ENCODE measurements at regions of chr7 and their contacts with region 1.

Region 1: DNA sequence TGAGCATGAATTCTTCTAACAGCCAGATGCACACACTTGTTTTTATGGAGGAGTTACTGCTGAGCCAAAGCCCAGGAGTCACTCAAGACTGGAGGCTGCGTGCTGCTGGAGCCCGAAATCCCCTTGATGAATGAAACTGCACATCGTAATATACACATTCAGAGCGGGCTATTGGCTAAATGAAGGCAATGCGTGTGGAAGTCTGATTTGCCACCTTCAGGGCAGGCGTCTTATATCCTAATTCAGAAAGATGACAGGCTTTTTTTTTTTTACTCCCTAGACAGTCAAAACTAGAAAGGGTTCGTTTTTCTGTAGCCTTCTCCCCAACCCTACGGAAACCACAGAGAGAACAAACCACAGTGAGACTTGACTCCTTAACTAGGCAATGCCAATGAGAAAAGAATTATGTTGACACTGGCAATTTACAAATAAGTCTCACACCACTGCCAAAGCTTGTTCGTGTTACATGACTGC is 227.2 kb upstream of the KLF14 start:
- H3K4me3 Mint-ChIP-seq: peak overlapping the region; percentile 66
- H3K27ac Mint-ChIP-seq: peak overlapping the region; percentile 95
- H3K4me1 Mint-ChIP-seq: peaks cover 67% of the 10 kb centered on the region
- H3K27me3 Mint-ChIP-seq: no peaks in the 10 kb centered on the region

Region 2: GRCh38 chr7:130912862-130913631 is 48.1 kb before region 1 on chr7:
- intact Hi-C with region 1: loop called (anchors 1 kb)
- H3K4me3 Mint-ChIP-seq: peak overlapping the region; percentile 69
- H3K27ac Mint-ChIP-seq: peak overlapping the region; percentile 79
- H3K4me1 Mint-ChIP-seq: peaks cover 83% of the 10 kb centered on the region
- H3K27me3 Mint-ChIP-seq: no peaks in the 10 kb centered on the region

Region 3: GRCh38 chr7:130943336-130943901 is 17.7 kb before region 1 on chr7:
- intact Hi-C with region 1: loop called (anchors 1 kb)
- H3K4me3 Mint-ChIP-seq: peak overlapping the region; percentile 60
- H3K27ac Mint-ChIP-seq: peak overlapping the region; percentile 72
- H3K4me1 Mint-ChIP-seq: peaks cover 63% of the 10 kb centered on the region
- H3K27me3 Mint-ChIP-seq: no peaks in the 10 kb centered on the region

Region 4: DNA sequence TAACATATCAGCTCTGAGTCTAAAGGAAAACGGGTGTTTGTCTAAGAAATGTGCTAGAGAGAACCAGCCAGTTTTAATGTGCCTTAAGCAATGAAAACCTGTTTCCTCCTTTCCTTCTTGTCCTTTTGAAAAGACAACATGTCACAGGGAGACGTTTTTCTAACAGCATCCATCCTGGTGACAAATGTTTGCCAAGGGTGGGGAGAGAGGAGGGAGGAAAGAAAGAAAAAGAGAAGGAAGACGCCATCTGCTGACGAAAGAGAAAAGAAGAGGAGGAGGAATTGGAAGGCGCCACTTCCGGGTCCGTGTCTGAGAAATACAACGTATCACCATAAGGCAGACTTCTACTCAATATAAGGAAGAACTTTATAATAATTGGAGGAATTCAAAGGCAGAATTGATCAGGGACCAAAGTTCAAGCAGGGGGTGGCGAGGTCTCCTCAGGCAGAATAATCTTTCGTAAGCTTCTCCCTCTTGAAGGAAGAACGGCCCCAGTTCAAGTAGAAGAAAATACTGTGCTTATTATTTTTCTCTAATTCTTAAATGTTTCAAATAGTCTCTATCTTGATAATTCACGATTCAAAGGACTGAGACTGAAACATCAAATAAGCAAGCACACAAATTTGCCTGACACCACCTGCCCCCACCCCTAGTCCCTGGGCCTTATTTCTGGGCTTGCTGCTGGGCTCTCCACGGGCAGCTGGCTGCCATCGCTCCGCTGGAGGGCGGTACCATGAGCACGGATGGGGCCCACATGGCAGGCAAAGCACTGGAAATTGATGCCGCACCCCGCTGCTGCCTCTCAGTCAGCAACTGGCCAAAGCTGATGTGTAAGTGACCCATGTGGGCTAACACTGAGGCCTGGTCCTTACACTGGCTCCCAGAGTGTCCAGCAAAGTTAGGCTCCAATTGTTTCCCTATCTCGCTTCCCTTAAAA is 46.5 kb after region 1 on chr7:
- intact Hi-C with region 1: loop called (anchors 5 kb)
- H3K4me3 Mint-ChIP-seq: peak overlapping the region; percentile 10
- H3K27ac Mint-ChIP-seq: peak overlapping the region; percentile 69
- H3K4me1 Mint-ChIP-seq: peaks cover 63% of the 10 kb centered on the region
- H3K27me3 Mint-ChIP-seq: no peaks in the 10 kb centered on the region

Region 5: GRCh38 chr7:131103997-131104396 is 142.8 kb after region 1 on chr7:
- intact Hi-C with region 1: no loop called
- H3K4me3 Mint-ChIP-seq: no peak overlapping the region
- H3K27ac Mint-ChIP-seq: no peak overlapping the region
- H3K4me1 Mint-ChIP-seq: peaks cover 56% of the 10 kb centered on the region
- H3K27me3 Mint-ChIP-seq: no peaks in the 10 kb centered on the region

Measured in dendritic cell treated with granulocyte-macrophage colony-stimulating factor and Interleukin-4, amounts not matched to agents 40 ng/mL and 50 ng/mL, for 4 days (primary cell).